ENCODE measurements at regions of chr3 and their contacts with region 1.

Region 1: DNA sequence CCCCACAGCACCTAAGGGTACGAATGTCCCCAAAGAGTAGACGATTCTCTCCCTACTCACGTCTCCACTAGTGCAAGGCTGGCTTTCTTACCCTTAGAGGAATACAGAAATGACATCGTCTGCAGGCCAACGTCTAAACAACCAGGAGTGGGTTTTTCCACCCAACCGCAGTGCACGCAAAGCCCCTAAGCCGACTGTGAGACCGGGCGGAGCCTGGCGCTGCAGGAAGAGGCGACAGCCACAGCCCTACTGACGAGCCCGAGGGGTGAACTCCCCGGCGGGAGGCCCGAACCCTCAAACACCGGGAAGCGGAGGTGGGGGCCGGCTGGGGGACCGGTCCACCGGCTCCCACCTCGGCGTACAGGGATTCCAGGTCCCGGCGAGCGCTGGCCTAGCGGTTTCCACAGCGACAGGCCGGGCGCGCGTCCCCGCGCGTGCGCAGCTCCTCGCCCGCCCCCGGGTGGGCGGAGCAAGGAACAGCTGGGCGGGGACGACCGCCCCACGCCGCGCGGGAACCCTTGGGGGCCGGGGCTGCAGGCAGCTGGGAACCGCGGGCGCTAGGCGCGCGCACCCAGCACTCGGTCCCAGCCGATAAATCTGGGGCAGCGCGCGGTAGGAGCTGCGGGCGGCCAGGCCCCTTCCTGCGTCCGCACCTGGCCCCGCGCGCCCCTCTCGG is at the starts of genes CEP19 and PIGX:
- DNase-seq: peak; percentile 81
- ATAC-seq: peak; percentile 93
- H3K4me3 ChIP-seq: peak within 1 kb of the TSS; percentile 70
- H3K27ac ChIP-seq: peak within 1 kb of the TSS; percentile 61
- H3K4me1 ChIP-seq: 0 out of 2 replicates have a peak, but pooled peaks cover 3% of the 10 kb centered on the region
- H3K27me3 ChIP-seq: no peaks in the 10 kb centered on the region
- CTCF ChIP-seq: no peak
- POLR2A ChIP-seq: peak; percentile 65
- RAD21 ChIP-seq: no peak
- total RNA-seq, gene CEP19: 1.1 and 1.7 TPM in 2 replicates
- total RNA-seq, gene PIGX: 14.5 and 22.2 TPM in 2 replicates

Region 2: GRCh38 chr3:196726788-196727675 is 15.1 kb after region 1 on chr3:
- CTCF ChIA-PET with region 1: no interaction called
- POLR2A ChIA-PET with region 1: interaction called, 10 read pairs
- dilution Hi-C with region 1: no loop called
- in situ Hi-C with region 1: no loop called
- intact Hi-C with region 1: no loop called
- DNase-seq: peak; percentile 46
- ATAC-seq: peak; percentile 40; the same call in 1 of the 2 replicates
- H3K4me3 ChIP-seq: no peak overlapping the region
- H3K27ac ChIP-seq: no peak overlapping the region
- H3K4me1 ChIP-seq: no peaks in the 10 kb centered on the region
- H3K27me3 ChIP-seq: no peaks in the 10 kb centered on the region
- CTCF ChIP-seq: no peak
- POLR2A ChIP-seq: no peak
- RAD21 ChIP-seq: no peak

Region 3: DNA sequence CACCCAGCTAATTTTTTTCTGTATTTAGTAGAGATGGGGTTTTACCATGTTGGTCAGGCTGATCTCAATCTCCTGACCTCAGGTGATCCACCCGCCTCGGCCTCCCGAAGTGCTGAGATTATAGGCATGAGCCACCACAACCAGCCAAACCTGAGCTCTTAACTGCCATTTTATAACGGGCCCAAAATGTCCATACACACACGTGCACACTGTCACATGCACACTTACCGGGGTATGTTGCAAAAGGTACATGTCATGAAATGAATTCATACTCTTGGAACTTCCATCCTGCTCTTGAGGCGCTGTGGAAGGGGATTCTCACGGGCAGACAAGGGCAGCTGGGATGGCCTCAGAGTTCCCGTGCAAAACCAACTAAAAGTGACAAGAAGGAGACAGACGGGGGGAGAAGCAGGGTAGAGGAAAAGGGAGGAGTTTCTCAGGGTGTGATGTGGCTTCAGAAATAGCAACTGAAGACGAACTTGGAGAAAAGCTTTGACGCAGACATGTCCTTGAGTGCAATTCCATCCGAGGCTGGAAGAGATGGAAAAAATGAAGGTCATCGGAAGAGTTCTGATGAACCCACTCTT is 732.9 kb after region 1 on chr3:
- CTCF ChIA-PET with region 1: no interaction called
- POLR2A ChIA-PET with region 1: no interaction called
- dilution Hi-C with region 1: no loop called
- in situ Hi-C with region 1: no loop called
- intact Hi-C with region 1: no loop called
- DNase-seq: no peak
- ATAC-seq: no peak
- H3K4me3 ChIP-seq: no peak overlapping the region
- H3K27ac ChIP-seq: no peak overlapping the region
- H3K4me1 ChIP-seq: no peaks in the 10 kb centered on the region
- H3K27me3 ChIP-seq: peaks cover 42% of the 10 kb centered on the region
- CTCF ChIP-seq: no peak
- POLR2A ChIP-seq: no peak
- RAD21 ChIP-seq: no peak